Mucosa of descending colon (tissue), 3 donors: ENCODE measurements at regions of chr6 and their contacts with region 1.

Region 1: GRCh38 chr6:125956506-125957390 is at the start of gene HINT3:
- DNase-seq: peak; percentile 98 to 99 (median 98)
- ATAC-seq: peak; percentile 94
- H3K4me3 ChIP-seq: peak within 1 kb of the TSS; percentile 81
- H3K4me1 ChIP-seq: peaks cover 4% of the 10 kb centered on the region
- CTCF ChIP-seq: peak; percentile 97
- total RNA-seq, gene HINT3: 23.2 to 32.9 (median 23.2) TPM

Region 2: GRCh38 chr6:125779924-125780539 is 176.7 kb before region 1 on chr6:
- intact Hi-C with region 1: loop called (anchors 10 kb)
- DNase-seq: peak; percentile 83 to 89 (median 86)
- ATAC-seq: peak; percentile 94
- H3K4me3 ChIP-seq: peak overlapping the region; percentile 7
- H3K4me1 ChIP-seq: no peaks in the 10 kb centered on the region
- CTCF ChIP-seq: no peak

Region 3: DNA sequence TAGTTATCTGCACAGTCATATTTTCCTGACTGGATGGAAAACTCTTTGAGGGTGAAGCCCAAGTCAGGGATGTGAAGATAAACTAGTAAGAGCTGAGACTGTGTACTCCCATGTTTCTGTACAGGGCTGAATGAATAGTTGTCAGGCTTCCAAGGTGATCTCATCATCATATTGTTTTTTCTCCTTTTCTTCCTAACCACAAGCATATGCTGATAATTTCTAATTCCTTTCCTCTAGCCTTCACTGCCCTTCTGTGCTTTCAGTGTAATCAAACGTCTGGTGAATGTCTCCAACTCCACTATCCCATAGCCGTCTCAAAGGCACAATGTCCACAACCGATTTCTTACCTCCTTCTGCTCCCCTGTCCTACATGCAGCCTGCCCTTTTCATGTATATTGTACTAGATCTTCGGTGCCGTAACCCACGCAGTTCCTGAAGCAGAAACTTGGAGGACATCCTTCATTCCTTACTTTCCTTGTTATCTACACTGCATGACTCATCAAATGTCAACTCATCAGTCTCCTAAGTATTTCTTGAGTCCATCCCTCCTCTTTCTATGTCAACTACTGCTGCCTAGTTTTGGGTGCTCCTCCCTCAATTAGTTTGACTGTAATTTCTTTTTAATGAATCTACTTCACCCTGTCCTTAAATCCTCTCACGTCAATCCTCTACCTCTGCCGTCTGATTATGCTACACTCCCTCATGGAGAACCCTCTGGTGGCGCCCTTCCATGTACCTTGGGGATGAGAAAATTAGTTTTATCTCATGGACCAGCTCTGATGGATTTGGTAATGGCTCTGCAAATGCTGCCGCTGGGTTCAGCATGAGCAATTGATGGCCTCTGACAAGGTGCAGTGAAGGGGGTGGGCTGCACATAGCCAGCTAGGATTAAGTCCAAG is 144.1 kb before region 1 on chr6:
- intact Hi-C with region 1: no loop called
- DNase-seq: no peak
- ATAC-seq: no peak
- H3K4me3 ChIP-seq: no peak overlapping the region
- H3K4me1 ChIP-seq: no peaks in the 10 kb centered on the region
- CTCF ChIP-seq: no peak